Activated CD8-positive, alpha-beta T cell treated with anti-CD3 and anti-CD28 coated beads, Interleukin-2, amount 10 ng/mL, durations not matched to agents 7 days and 5 days (primary cell): ENCODE measurements at regions of chr1 and their contacts with region 1.

Region 1: GRCh38 chr1:93846211-93846991 is 32.6 kb downstream of the DNTTIP2 start:
- DNase-seq: peak; percentile 88
- ATAC-seq: peak; percentile 58
- H3K4me3 Mint-ChIP-seq: peak overlapping the region; percentile 93
- H3K27ac Mint-ChIP-seq: peak overlapping the region; percentile 92
- H3K4me1 Mint-ChIP-seq: peaks cover 36% of the 10 kb centered on the region
- H3K27me3 Mint-ChIP-seq: peaks cover 9% of the 10 kb centered on the region

Region 2: DNA sequence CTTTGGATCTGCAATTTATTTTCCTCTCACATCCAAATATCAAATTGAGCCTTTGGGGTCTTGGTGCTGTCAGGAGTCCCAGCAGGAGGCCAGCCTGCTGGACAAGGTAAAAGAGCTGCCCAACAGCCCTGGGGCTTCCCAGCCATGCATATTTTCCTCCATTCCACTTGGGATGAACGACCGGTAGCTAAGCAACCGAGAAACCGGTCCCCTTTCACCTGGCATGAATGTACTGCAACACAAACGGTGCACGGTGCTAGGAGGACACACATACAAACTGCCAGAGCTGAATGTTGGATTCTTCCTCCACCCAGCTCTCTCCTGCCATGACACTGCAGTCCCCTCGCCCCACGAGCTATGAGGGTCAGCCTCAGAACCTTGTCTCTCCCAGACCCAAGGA is 207.4 kb before region 1 on chr1:
- CTCF ChIA-PET with region 1: interaction called, 15 read pairs
- POLR2A ChIA-PET with region 1: interaction called, 3 read pairs
- DNase-seq: no peak
- ATAC-seq: no peak
- H3K4me3 Mint-ChIP-seq: no peak overlapping the region
- H3K27ac Mint-ChIP-seq: no peak overlapping the region
- H3K4me1 Mint-ChIP-seq: peaks cover 18% of the 10 kb centered on the region
- H3K27me3 Mint-ChIP-seq: no peaks in the 10 kb centered on the region

Region 3: GRCh38 chr1:93672069-93672468 is 174.3 kb before region 1 on chr1:
- CTCF ChIA-PET with region 1: interaction called, 13 read pairs
- POLR2A ChIA-PET with region 1: no interaction called
- DNase-seq: no peak
- ATAC-seq: no peak
- H3K4me3 Mint-ChIP-seq: no peak overlapping the region
- H3K27ac Mint-ChIP-seq: no peak overlapping the region
- H3K4me1 Mint-ChIP-seq: no peaks in the 10 kb centered on the region
- H3K27me3 Mint-ChIP-seq: peaks cover 6% of the 10 kb centered on the region

Region 4: DNA sequence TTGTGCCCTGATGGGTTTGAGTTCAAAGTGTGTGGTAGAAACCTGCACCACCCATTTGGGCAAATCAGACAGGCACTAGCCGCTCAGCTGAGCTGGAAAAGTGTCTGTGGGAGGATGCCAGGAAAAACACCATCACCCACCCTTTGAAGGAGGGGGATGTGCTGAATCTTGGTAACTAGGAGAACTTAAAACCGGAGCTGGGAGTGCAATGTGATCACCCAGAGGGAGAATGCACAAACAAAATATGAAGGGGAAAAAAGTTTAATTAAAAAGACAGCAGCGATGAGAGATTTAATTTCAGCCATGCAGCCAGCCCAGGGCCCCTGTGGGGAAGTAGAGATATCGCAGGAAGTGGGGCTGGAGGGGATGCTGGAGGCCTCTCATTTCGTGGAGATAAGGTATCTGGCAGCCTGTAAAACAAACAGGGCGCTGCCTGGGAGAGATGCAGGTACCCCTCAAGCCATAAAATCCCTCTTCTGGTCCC is 78.0 kb before region 1 on chr1:
- CTCF ChIA-PET with region 1: no interaction called
- POLR2A ChIA-PET with region 1: no interaction called
- DNase-seq: no peak
- ATAC-seq: no peak
- H3K4me3 Mint-ChIP-seq: no peak overlapping the region
- H3K27ac Mint-ChIP-seq: no peak overlapping the region
- H3K4me1 Mint-ChIP-seq: peaks cover 22% of the 10 kb centered on the region
- H3K27me3 Mint-ChIP-seq: peaks cover 7% of the 10 kb centered on the region

Region 5: GRCh38 chr1:93814059-93814794 is 32.2 kb before region 1 on chr1:
- CTCF ChIA-PET with region 1: interaction called, 76 read pairs
- POLR2A ChIA-PET with region 1: no interaction called
- DNase-seq: peak; percentile 71
- ATAC-seq: peak; percentile 72
- H3K4me3 Mint-ChIP-seq: no peak overlapping the region
- H3K27ac Mint-ChIP-seq: no peak overlapping the region
- H3K4me1 Mint-ChIP-seq: peaks cover 19% of the 10 kb centered on the region
- H3K27me3 Mint-ChIP-seq: no peaks in the 10 kb centered on the region

Region 6: DNA sequence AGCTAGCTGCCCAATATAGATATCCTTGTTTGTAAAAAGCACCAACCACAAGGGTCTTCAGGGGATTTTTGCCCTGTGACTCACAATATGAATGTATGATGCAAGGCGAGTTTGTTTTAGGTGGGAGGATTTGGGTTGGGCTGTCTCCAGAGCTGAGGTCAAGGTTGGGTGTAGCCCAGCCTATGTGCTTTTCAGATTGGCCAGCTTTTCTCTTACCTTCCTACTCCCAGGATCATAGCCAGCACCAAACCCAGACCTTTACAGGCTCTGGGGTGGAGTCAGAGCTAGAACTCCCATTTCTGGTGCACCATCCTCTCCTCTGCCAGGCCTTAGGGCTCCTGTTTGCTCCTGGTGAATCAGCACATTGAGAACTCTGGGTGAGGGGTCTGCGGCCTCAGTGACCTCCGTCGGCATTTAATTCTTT is 118.4 kb after region 1 on chr1:
- CTCF ChIA-PET with region 1: no interaction called
- POLR2A ChIA-PET with region 1: no interaction called
- DNase-seq: no peak
- ATAC-seq: no peak
- H3K4me3 Mint-ChIP-seq: no peak overlapping the region
- H3K27ac Mint-ChIP-seq: no peak overlapping the region
- H3K4me1 Mint-ChIP-seq: no peaks in the 10 kb centered on the region
- H3K27me3 Mint-ChIP-seq: no peaks in the 10 kb centered on the region